PC-3 (cell line): ENCODE measurements at regions of chr12 and their contacts with region 1.

Region 1: DNA sequence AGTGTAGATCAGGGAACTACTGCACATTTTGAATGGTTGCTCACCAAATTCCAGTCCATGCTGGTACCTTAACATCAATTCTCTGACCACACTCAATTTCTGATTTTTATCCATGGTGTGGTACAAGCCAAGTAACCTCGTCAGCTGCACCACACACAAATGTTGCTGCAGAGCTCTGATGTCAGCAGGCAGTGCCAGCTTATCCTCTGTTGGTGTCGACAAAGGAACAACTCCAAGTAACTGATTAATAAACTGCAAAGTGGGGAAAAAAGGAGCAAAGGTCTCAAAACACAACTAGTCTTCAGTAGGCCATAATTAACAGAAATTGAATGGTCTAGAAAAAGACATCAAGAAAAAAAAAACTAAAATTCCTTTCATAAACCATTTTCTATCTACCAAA is 47.4 kb downstream of the NAA25 start:
- DNase-seq: no peak
- ATAC-seq: no peak
- H3K4me3 ChIP-seq: no peak overlapping the region
- H3K27ac ChIP-seq: no peak overlapping the region
- H3K4me1 ChIP-seq: no peaks in the 10 kb centered on the region
- H3K27me3 ChIP-seq: no peaks in the 10 kb centered on the region
- CTCF ChIP-seq: no peak

Region 2: DNA sequence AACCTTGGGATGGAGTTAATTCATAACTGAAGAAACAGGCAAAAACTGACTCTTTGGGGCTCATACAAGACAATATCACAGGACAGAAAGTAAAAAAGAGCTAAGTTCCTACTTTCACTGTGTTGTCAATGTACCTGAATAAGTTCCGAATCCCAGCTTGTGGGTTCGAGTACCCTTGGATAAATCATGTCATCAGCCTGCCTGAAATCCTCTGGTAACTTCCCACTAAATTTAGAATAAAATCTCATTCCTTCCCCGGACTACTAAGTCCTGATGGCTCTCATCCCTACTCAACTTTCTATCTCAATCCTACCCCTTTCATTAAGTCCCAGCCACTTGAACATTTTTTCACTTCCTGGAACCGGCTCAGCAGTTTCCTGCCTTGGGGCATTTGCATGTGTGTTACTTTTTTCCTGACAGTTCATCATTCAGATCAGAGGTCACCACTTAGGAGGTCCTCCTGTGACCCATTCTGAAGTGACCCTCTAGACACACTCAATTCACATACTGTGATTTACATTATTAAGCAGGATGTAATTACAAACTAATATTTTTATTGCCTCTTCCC is 35.2 kb before region 1 on chr12:
- CTCF ChIA-PET with region 1: no interaction called
- POLR2A ChIA-PET with region 1: interaction called, 11 read pairs
- intact Hi-C with region 1: no loop called
- DNase-seq: no peak
- ATAC-seq: peak; percentile 30
- H3K4me3 ChIP-seq: no peak overlapping the region
- H3K27ac ChIP-seq: no peak overlapping the region
- H3K4me1 ChIP-seq: no peaks in the 10 kb centered on the region
- H3K27me3 ChIP-seq: no peaks in the 10 kb centered on the region
- CTCF ChIP-seq: no peak

Region 3: GRCh38 chr12:112116232-112117060 is 55.3 kb after region 1 on chr12:
- CTCF ChIA-PET with region 1: no interaction called
- POLR2A ChIA-PET with region 1: interaction called, 11 read pairs
- intact Hi-C with region 1: no loop called
- DNase-seq: no peak
- ATAC-seq: peak; percentile 14
- H3K4me3 ChIP-seq: no peak overlapping the region
- H3K27ac ChIP-seq: peak overlapping the region; percentile 77
- H3K4me1 ChIP-seq: peaks cover 41% of the 10 kb centered on the region
- H3K27me3 ChIP-seq: no peaks in the 10 kb centered on the region
- CTCF ChIP-seq: no peak